Thyroid gland (tissue), 4 donors: ENCODE measurements at regions of chrX and their contacts with region 1.

Region 1: GRCh38 chrX:19334945-19335626 is 8.6 kb upstream of the PDHA1 start:
- DNase-seq: no peak
- H3K4me3 ChIP-seq: no peak overlapping the region
- H3K27ac ChIP-seq: no peak overlapping the region
- H3K4me1 ChIP-seq: no peaks in the 10 kb centered on the region
- H3K27me3 ChIP-seq: no peaks in the 10 kb centered on the region
- CTCF ChIP-seq: no peak
- POLR2A ChIP-seq: no peak

Region 2: DNA sequence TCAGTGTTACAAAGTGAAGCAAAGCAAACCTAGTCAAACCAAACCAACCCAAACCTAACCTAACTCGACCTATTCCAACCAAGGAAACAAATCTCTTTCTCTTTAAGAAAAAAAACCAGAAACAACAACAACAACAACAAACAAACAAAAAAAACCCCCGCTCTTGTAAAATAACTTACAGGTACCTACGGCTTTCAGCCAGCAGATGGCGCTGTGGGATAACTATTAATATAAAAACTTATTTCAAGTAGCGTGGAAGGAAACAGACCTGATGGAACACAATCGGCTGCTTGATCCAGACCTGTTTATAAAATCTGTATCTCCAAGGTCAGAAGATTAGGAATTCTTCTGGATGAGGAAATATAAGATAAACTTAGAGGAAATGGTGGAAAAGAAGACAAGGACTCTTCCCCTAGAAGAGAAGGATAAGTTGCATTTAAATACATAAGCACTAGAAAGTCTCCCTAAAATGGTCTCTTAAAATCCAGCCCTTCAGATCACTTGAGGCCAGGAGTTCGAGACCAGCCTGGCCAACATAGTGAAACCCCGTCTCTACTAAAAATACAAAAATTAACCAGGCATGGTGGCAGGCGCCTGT is 944.0 kb before region 1 on chrX:
- intact Hi-C with region 1: loop called (anchors 5 kb)
- DNase-seq: peak; percentile 52 to 62
- H3K4me3 ChIP-seq: no peak overlapping the region
- H3K27ac ChIP-seq: no peak overlapping the region
- H3K4me1 ChIP-seq: no peaks in the 10 kb centered on the region
- H3K27me3 ChIP-seq: no peaks in the 10 kb centered on the region
- CTCF ChIP-seq: peak in 5 of 6 experiments; percentile 50 to 72 (median 65)
- POLR2A ChIP-seq: no peak